Heart left ventricle (tissue), 16 donors: ENCODE measurements at regions of chr19 and their contacts with region 1.

Region 1: GRCh38 chr19:3572132-3572854 is 451 bp upstream of the HMG20B start:
- DNase-seq: peak; percentile 100
- ATAC-seq: peak; percentile 96 to 98 (median 98)
- H3K4me3 ChIP-seq: peak overlapping the region in 11 of 12 donors; percentile 29 to 97 (median 84)
- H3K27ac ChIP-seq: peak overlapping the region in 8 of 12 donors; percentile 14 to 85 (median 50)
- H3K4me1 ChIP-seq: peaks cover 0 to 37% (median 22%) of the 10 kb centered on the region in 12 donors
- H3K27me3 ChIP-seq: no peaks in the 10 kb centered on the region
- CTCF ChIP-seq: no peak
- POLR2A ChIP-seq: peak in 1 of 2 donors; percentile 11

Region 2: DNA sequence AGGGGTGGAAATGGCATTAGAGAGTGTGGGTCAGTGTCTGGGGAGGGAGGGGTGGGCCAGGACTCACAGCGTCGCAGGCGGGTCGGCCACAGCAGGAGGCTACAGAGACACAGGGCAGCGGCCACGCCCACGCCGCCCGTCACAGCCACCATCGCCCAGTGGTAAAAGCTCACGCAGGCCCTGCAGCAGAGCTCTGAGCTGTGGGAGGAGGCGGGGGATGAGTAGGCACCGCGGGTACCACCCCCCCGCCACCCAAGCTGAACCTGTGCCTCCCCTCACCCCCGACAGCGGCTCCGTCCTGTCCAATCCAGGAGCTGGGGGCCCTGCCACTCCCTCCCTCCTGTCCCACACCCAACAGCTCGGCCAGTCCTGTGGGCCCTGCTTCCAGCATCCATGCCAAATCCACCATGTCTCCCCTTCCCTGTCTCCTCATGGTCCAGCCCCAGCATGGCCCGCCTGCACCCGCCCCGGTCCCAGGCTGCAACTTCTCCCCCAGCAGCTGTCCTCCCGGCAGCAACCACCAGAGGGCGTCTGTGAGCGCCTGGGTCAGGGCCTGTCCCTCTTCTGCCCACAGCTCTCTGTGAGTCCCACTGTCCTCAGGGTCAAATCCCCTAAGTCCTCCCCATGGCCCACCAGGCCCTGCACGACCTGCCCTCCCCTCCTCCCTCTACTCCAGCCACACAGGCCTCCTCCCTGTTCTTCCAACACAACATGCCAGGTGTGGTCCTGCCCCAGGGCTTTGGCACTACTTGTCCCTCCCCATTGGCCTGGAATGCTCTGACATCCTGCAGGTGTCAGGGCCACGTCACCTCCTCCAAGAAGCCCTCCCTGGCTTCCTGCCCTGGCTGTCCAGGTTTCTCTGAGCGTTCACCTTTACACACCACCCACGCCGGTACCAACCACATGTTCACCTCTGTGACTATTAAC is 27.3 kb before region 1 on chr19:
- intact Hi-C with region 1: no loop called
- DNase-seq: peak; percentile 62 to 87 (median 68)
- ATAC-seq: peak; percentile 18 to 69 (median 62)
- H3K4me3 ChIP-seq: no peak overlapping the region
- H3K27ac ChIP-seq: no peak overlapping the region
- H3K4me1 ChIP-seq: peaks cover 0 to 9% (median 0%) of the 10 kb centered on the region in 12 donors
- H3K27me3 ChIP-seq: no peaks in the 10 kb centered on the region
- CTCF ChIP-seq: peak; percentile 74 to 97 (median 90)
- POLR2A ChIP-seq: no peak

Region 3: DNA sequence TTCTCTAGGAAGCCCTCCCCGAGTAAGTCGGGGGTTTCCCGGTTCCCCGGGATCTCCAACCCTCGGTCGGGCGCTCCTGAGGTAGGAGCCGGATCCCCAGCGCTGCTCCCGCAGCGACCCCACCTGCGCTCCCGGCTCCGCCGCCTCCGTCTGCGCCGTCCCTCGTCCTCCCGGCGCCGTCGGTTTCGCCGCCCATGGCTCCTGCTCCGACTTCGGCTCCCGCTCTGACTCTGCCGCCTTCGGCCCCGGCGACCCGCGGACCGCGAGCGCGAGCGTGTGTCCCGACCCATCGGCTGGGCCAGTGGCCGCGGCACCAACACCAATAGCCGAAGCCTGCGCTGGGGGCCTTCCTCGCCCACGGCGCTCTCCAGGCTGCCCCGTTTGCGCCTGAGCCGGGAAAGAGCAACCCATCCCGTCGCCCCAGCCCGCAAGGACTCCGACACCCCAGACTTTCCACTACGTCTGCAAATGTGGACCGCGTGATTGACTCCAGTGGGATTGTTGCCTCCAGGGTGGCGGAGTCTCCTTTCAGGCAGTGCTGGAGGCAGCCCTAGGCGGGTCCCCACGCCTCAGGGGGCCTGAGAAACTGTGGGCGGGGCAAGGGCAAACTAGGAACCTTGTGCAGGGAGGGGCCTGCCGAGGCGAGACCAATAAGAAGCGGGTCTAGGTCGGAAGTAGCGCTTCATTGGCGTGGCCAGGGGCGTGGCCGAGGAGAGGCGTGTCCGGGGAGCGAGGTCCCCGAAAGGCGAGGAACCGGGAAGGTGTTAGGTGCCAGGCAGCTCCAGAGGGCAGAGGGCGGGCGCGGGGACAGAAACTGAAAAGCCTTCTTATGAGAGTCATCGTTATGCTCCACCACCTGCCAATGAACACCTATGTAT is 54.4 kb after region 1 on chr19 and contains the start of gene CACTIN:
- intact Hi-C with region 1: loop called in 1 of 10 experiments (anchors 2 kb)
- DNase-seq: peak; percentile 98 to 100 (median 99)
- ATAC-seq: peak; percentile 98 to 99 (median 98)
- H3K4me3 ChIP-seq: peak within 1 kb of the TSS; percentile 78 to 100 (median 88)
- H3K27ac ChIP-seq: peak within 1 kb of the TSS; percentile 77 to 100 (median 94)
- H3K4me1 ChIP-seq: peaks cover 0 to 28% (median 19%) of the 10 kb centered on the region in 12 donors
- H3K27me3 ChIP-seq: no peaks in the 10 kb centered on the region
- CTCF ChIP-seq: peak in 1 of 12 donors; percentile 17
- POLR2A ChIP-seq: peak in 1 of 2 donors; percentile 80
- total RNA-seq, gene CACTIN: 9.8 to 23.4 (median 14.1) TPM